Endothelial cell of umbilical vein (primary cell): ENCODE measurements at regions of chr5 and their contacts with region 1.

Region 1: DNA sequence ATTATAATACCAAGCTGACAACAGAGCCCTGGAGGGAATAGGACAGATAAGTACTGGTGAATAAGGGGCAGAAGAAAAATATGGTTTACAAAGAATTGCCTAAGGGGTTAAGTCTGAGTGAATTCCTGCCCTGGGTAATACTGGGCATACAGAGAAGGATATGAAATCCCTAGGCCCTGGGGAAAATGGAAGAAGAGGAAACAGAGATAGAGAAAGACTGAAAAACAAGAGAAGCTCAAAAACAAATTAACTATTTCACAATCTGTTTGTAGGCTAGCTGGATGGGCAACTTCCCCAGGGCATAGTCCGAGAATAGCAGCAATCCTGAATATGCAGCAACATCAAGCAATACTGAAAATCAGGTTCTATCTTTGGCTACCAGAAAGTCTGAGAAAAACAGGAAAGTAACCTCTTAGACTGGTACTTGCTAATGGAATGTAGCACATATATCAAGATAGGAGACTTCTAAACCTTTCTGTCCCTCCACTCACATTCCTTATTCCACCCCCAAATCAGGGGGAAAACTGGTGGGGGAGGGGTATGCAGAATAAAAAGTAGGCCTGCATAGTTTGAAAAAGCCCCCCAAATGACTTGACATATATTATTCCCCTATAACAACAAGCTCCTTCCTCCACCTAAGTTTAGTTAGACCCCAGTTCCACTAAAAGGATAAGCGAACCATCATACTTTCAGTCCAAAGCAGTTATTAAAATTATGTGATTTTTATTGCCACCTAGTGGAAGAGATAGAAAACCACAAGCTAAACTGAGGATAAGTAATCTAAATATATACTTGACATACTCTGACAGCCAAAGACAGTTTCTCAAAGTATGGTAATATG is 20.6 kb downstream of the SLC38A9 start:
- DNase-seq: peak; percentile 57
- H3K4me3 ChIP-seq: no peak overlapping the region
- H3K27ac ChIP-seq: no peak overlapping the region
- H3K4me1 ChIP-seq: no peaks in the 10 kb centered on the region
- H3K27me3 ChIP-seq: no peaks in the 10 kb centered on the region
- CTCF ChIP-seq: peak; percentile 29 to 32
- POLR2A ChIP-seq: no peak

Region 2: DNA sequence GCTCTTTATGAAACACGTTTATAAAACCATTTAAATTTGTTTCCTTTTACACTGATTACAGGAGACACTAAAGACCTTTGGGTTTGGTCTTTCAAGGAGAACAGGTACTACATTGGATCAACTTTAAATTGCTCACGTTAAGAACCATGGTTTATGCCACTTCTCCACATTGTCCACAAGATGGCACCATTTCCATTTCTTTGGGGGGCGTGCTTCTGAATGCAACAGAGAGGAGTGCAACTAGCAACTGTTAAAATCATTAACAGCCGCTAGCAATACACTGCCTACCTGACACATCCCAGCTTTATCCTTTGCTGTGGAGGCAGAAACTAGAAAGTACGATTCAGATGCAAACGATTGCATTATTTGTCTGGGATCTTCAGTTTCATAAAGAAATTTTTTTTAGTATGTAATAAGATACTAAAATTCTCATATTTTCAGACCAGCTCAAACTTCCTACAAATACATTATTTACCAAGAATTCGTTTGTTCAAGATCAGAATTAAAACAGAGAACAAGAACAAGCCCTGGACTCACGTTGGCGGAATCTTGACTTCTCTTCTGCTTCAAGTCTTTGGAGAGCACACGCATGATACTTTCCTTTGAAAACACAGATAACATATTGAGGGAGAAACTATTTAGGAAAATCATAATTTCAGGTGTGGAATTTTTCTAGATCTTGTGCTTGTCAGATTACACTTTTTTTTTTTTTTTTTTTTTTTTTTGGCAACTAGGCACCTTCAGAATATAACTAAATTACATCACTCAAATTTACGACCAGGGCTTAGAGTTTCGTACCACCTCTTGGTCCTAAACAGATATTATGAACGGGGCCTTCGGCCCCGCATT is 519.2 kb before region 1 on chr5:
- CTCF ChIA-PET with region 1: interaction called, 12 read pairs
- POLR2A ChIA-PET with region 1: no interaction called
- dilution Hi-C with region 1: no loop called
- intact Hi-C with region 1: loop called (anchors 1 kb)
- DNase-seq: peak; percentile 79
- H3K4me3 ChIP-seq: peak overlapping the region in 2 of 3 experiments; percentile 28 to 46
- H3K27ac ChIP-seq: no peak overlapping the region
- H3K4me1 ChIP-seq: peaks cover 21% of the 10 kb centered on the region
- H3K27me3 ChIP-seq: peaks cover 31 to 39% of the 10 kb centered on the region in 2 experiments
- CTCF ChIP-seq: peak; percentile 60 to 70
- POLR2A ChIP-seq: no peak

Region 3: DNA sequence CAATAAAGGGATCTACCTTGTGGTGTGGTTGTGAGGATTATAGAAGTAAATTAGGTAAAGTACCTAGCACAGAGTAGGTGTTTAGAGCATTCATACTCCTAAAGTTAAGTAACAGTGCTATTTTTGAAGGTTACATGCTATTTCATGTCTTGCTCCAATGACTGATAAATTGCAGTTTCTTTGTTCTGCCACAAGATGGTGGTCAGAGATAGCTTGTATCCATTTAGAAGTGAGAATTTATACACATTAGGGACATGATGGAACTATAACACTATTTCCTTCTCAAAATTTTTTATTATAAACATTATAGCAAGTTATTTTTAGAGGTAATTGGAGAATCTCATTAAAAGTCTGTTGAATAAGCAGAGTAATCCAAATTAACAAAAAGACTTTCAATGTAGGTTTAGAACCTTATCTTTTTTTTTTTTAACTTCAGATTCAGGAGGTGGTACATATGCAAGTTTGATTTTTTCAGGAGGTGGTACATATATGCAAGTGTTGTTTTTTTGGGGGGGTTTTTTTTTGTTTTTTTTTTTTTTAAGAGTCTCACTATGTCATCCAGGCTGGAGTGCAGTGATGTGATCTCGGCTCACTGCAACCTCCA is 366.6 kb before region 1 on chr5:
- CTCF ChIA-PET with region 1: interaction called, 37 read pairs
- POLR2A ChIA-PET with region 1: no interaction called
- dilution Hi-C with region 1: no loop called
- intact Hi-C with region 1: loop called (anchors 1 kb)
- DNase-seq: peak; percentile 67
- H3K4me3 ChIP-seq: no peak overlapping the region
- H3K27ac ChIP-seq: no peak overlapping the region
- H3K4me1 ChIP-seq: no peaks in the 10 kb centered on the region
- H3K27me3 ChIP-seq: no peaks in the 10 kb centered on the region
- CTCF ChIP-seq: peak; percentile 43 to 47
- POLR2A ChIP-seq: no peak

Region 4: GRCh38 chr5:55407059-55407684 is 284.3 kb before region 1 on chr5:
- CTCF ChIA-PET with region 1: interaction called, 96 read pairs
- POLR2A ChIA-PET with region 1: no interaction called
- dilution Hi-C with region 1: no loop called
- intact Hi-C with region 1: loop called (anchors 1 kb)
- DNase-seq: peak; percentile 54
- H3K4me3 ChIP-seq: no peak overlapping the region
- H3K27ac ChIP-seq: no peak overlapping the region
- H3K4me1 ChIP-seq: no peaks in the 10 kb centered on the region
- H3K27me3 ChIP-seq: no peaks in the 10 kb centered on the region
- CTCF ChIP-seq: peak; percentile 46 to 64
- POLR2A ChIP-seq: no peak

Region 5: DNA sequence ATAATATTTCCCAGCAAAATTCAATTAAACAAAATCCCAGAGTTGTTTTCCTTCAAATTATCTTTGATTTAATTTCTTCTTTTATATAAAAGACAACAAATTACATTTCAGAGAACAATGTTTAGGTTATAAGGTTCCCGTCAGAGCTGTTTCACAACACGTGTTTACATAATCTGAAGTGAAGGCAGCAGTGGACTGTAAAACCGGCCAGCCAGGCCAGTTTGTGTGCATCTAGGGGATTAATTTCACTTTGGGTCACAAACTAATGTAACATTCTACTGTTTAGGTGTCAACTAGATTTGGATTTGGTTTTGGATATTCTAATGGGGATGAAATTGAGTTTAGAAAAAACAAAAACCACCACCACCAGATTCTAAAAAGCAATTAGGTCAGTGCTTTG is 70.3 kb before region 1 on chr5:
- CTCF ChIA-PET with region 1: no interaction called
- POLR2A ChIA-PET with region 1: no interaction called
- dilution Hi-C with region 1: no loop called
- intact Hi-C with region 1: no loop called
- DNase-seq: no peak
- H3K4me3 ChIP-seq: no peak overlapping the region
- H3K27ac ChIP-seq: no peak overlapping the region
- H3K4me1 ChIP-seq: no peaks in the 10 kb centered on the region
- H3K27me3 ChIP-seq: no peaks in the 10 kb centered on the region
- CTCF ChIP-seq: no peak
- POLR2A ChIP-seq: no peak

Region 6: DNA sequence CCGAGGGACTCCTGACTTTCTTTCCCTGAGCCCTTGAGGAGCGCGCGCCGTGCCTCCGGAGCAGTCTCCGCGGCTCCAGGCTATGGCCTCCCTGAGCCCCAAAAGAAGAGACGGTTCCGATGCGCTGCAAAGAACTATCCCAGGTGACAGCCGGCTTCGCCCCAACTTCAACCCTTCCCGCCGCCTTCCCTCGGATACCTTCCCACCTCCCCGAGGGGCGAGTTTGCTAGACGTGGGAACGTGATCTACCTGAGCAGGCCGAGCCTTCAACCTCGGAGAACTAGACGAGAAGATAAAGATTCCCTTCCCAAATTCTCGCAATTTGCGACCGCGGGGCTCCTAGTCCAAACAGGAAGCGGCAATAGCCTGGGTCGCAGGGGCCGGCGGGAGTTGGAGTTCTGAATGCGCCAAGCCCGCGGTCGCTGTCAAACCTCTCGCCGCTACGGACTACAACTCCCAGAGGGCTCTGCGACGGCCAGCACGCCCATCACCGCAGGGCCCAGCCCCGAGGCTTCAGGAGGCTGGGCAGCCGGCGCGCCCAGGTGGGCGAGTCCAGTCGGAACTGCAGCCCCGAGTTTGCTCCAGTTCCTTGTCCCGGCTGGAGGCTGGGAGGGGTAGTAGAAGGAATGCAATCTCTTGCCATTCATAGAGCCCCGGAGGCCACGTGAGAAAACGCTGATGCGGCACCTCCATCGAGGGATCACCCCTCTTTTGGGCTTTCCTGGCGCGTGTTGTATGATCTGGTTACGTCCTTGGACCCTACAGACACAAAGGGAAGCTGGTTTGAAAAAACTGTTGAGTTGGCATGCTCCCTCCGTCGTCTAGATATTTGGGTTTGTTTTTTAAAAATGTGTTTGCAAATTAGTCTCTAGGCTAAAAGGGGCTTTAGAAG is 20.7 kb after region 1 on chr5 and contains the start of gene SLC38A9:
- CTCF ChIA-PET with region 1: interaction called, 14 read pairs
- POLR2A ChIA-PET with region 1: no interaction called
- dilution Hi-C with region 1: no loop called
- intact Hi-C with region 1: no loop called
- DNase-seq: peak; percentile 93
- H3K4me3 ChIP-seq: peak within 1 kb of the TSS; percentile 66 to 81 (median 81)
- H3K27ac ChIP-seq: peak within 1 kb of the TSS; percentile 19
- H3K4me1 ChIP-seq: peaks cover 9% of the 10 kb centered on the region
- H3K27me3 ChIP-seq: no peaks in the 10 kb centered on the region
- CTCF ChIP-seq: no peak
- POLR2A ChIP-seq: peak; percentile 93
- total RNA-seq, gene SLC38A9: 24.9 and 29.0 TPM in 2 replicates

Region 7: GRCh38 chr5:56200856-56201666 is 509.6 kb after region 1 on chr5:
- CTCF ChIA-PET with region 1: no interaction called
- POLR2A ChIA-PET with region 1: no interaction called
- dilution Hi-C with region 1: no loop called
- intact Hi-C with region 1: loop called (anchors 5 kb)
- DNase-seq: peak; percentile 93
- H3K4me3 ChIP-seq: no peak overlapping the region
- H3K27ac ChIP-seq: peak overlapping the region; percentile 10
- H3K4me1 ChIP-seq: peaks cover 17% of the 10 kb centered on the region
- H3K27me3 ChIP-seq: no peaks in the 10 kb centered on the region
- CTCF ChIP-seq: peak; percentile 69 to 80
- POLR2A ChIP-seq: no peak